BJ (cell line): ENCODE measurements at regions of chr1 and their contacts with region 1.

Region 1: GRCh38 chr1:66931590-66931989 is 6.8 kb downstream of the MIER1 start:
- DNase-seq: no peak
- H3K4me3 ChIP-seq: peak overlapping the region; percentile 84
- H3K27me3 ChIP-seq: no peaks in the 10 kb centered on the region
- CTCF ChIP-seq: no peak

Region 2: DNA sequence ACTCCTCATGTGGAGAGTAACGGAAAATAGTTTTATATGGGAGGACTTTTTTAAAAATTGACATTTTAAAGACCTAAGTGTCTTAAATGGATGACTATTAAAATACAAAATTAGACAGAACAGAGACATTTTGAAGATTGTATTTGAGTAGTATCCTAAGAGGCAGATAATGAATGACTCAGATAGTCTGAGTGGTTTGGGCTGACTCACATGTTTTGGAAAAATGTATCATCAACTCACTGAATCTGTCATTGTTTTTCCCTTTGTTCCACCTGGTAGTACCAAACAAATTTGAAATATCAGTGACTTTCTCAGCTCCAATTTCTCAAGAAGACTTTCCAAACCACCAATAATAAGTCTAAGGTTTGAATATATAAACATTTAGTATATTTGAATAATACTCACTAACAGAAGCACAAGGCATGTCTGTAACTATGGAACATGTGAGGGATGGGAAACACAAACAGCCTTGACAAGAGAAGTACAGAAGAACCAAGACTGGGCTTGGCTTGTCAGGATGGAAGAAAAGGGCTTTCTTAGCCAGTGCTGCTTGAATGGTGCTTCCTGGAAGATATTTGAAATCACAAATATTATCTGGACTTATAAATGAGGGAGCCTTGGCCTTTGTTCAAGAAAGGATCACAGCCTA is 307.1 kb before region 1 on chr1:
- CTCF ChIA-PET with region 1: no interaction called
- POLR2A ChIA-PET with region 1: no interaction called
- DNase-seq: peak; percentile 60
- H3K4me3 ChIP-seq: no peak overlapping the region
- H3K27me3 ChIP-seq: no peaks in the 10 kb centered on the region
- CTCF ChIP-seq: no peak

Region 3: DNA sequence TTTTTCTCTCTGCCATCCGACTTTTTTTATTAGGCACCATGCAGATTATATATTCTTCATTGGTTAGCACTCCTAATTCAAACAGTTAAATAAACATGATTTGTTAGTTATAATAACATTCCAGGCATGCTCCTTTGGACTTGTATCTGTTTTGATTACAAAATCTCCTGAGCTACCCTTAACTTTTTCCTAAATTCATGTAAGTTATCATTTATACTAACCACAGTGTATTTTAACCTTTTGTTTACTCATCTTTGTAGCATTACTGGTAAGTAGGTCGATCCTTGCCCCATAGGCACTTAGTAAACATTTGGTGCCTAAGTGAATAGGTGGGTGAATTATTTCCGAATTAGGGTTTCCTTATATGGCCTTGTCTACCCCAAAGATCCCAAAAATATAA is 37.0 kb after region 1 on chr1:
- CTCF ChIA-PET with region 1: no interaction called
- POLR2A ChIA-PET with region 1: interaction called, 10 read pairs
- DNase-seq: no peak
- H3K4me3 ChIP-seq: no peak overlapping the region
- H3K27me3 ChIP-seq: no peaks in the 10 kb centered on the region
- CTCF ChIP-seq: no peak